ENCODE measurements at regions of chr15 and their contacts with region 1.

Region 1: DNA sequence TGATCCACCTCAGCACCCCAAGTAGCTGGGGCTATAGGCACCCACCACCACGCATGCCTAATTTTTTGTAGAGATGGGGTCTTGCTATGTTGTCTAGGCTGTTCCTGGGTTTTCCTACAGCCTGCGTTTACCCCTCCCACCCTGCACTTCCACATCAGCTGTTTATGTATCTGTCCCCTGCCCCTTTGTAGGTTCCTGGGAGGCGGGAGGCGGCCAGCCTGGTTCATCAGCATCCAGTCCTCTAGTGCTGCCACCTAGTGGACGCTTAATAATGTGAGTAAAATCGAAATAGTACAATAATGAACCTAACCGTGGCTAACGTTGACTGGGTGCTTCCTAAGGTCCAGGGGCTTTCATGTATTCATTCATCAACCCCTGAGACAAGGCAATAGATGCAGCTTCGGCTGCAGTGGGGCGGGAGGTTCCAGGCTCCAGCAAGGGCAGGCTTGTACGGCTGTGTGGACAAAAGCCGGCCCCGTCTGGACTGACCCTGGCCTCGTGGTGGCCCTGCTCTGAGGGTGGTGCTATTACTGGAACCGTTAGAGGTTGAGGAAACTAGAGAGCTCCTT is 1.2 kb upstream of the LCTL start:
- DNase-seq: peak; percentile 38
- ATAC-seq: peak; percentile 87
- H3K4me3 ChIP-seq: peak overlapping the region in 1 of 2 experiments; percentile 16; a peak in 1 of 4 replicates
- H3K27ac ChIP-seq: no peak overlapping the region
- H3K4me1 ChIP-seq: peaks cover 7% of the 10 kb centered on the region; the same call in 1 of the 2 replicates
- H3K27me3 ChIP-seq: no peaks in the 10 kb centered on the region
- CTCF ChIP-seq: peak; percentile 89

Region 2: DNA sequence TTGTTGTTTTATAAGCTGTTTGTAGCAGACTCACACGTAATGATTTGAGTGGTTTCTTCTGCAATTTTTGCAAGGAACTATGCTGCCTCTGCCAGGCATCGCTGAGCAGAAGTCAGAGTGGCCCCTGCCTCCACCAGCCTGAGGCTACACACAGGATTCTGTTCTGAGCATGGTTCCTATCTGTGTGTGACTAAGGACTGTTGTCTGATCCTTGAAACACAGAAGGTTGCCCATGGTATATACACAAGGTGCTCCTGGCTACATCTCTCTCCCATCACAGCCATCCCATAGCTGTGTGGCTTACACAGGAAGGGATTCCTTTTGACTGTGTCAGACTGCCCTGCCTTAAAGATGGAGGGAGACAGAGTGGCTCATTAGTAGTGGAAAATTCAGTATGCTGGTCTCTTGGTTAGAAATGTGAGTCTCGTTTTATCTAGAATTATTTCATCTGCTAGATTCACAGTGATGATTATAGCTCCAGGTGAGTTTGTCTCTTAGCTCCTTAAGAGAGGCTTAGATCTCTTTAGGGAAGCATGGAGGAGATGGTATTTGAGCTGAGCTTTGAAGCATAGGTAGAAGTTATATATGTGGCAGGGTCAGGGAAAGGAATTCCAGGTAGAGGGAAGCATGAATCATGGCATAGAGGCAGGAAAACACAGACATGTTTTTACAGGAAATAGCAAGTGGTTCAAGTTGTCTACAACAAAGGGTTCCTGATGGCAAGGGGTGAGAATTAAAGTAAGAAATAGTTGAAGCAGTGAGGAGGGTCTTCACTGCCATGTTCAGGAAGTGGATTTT is 107.0 kb before region 1 on chr15:
- CTCF ChIA-PET with region 1: no interaction called
- POLR2A ChIA-PET with region 1: interaction called, 11 read pairs
- in situ Hi-C with region 1: no loop called
- intact Hi-C with region 1: no loop called
- DNase-seq: no peak
- ATAC-seq: no peak
- H3K4me3 ChIP-seq: no peak overlapping the region
- H3K27ac ChIP-seq: no peak overlapping the region
- H3K4me1 ChIP-seq: no peaks in the 10 kb centered on the region
- H3K27me3 ChIP-seq: no peaks in the 10 kb centered on the region
- CTCF ChIP-seq: no peak

Region 3: DNA sequence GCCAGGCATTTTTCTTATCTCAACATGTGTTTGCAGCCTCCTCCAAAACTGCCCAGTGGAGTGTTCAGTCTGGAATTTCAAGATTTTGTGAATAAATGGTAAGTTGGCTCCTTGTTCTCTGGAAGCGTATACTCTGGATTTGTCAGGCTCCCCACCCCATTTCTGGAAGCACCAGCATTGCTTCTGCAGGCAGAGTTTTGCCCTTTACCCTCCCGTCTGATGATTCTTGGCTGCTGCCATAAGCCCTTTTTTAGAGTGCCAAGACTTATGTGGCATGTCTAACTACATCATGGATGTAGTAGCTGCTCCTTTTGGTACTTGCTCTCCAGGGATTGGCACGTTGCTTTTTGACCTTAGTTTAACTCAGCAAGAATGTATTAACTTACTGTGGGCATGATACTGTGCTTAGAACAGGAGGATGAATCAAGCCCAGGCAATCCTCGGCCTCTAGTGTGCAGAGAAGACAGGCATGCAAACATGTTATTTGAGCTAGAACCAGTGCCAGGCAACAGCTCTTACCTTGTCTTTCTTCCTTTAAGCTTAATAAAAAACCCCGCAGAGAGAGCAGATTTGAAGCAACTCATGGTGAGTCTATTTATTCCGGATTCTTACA is 77.8 kb before region 1 on chr15:
- CTCF ChIA-PET with region 1: no interaction called
- POLR2A ChIA-PET with region 1: no interaction called
- in situ Hi-C with region 1: no loop called
- intact Hi-C with region 1: no loop called
- DNase-seq: no peak
- ATAC-seq: no peak
- H3K4me3 ChIP-seq: no peak overlapping the region
- H3K27ac ChIP-seq: no peak overlapping the region
- H3K4me1 ChIP-seq: no peaks in the 10 kb centered on the region
- H3K27me3 ChIP-seq: no peaks in the 10 kb centered on the region
- CTCF ChIP-seq: no peak

Region 4: GRCh38 chr15:66524838-66525237 is 42.2 kb before region 1 on chr15:
- CTCF ChIA-PET with region 1: interaction called, 12 read pairs
- POLR2A ChIA-PET with region 1: no interaction called
- in situ Hi-C with region 1: no loop called
- intact Hi-C with region 1: no loop called
- DNase-seq: no peak
- ATAC-seq: no peak
- H3K4me3 ChIP-seq: no peak overlapping the region
- H3K27ac ChIP-seq: no peak overlapping the region
- H3K4me1 ChIP-seq: no peaks in the 10 kb centered on the region
- H3K27me3 ChIP-seq: no peaks in the 10 kb centered on the region
- CTCF ChIP-seq: no peak

Region 5: DNA sequence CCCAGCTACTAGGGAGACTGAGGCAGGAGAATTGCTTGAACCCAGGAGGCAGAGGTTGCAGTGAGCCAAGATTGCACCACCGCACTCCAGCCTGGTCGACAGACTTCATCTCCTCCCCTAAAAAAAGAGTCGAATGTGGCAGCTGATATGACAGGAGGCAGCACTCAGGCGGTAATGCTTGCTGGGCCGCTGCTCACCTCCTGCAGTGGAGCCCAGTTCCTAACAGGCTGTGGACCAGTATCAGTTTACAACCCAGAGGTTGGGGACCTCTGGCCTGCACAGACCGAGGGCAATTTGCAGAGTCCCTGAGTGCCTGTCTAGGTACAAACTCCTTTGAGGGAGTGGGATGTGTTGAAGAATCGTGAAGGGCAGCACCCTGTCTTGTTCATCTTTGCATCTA is 271.2 kb after region 1 on chr15:
- CTCF ChIA-PET with region 1: interaction called, 13 read pairs
- POLR2A ChIA-PET with region 1: no interaction called
- in situ Hi-C with region 1: no loop called
- intact Hi-C with region 1: no loop called
- DNase-seq: no peak
- ATAC-seq: no peak
- H3K4me3 ChIP-seq: no peak overlapping the region
- H3K27ac ChIP-seq: peak overlapping the region; percentile 56
- H3K4me1 ChIP-seq: peaks cover 23% of the 10 kb centered on the region
- H3K27me3 ChIP-seq: no peaks in the 10 kb centered on the region
- CTCF ChIP-seq: no peak